ENCODE measurements at regions of chr14 and their contacts with region 1.

Region 1: GRCh38 chr14:69055999-69056788 is 77.1 kb upstream of the ACTN1 start:
- DNase-seq: peak; percentile 53
- H3K4me3 ChIP-seq: no peak overlapping the region
- H3K27ac ChIP-seq: peak overlapping the region; percentile 83
- H3K4me1 ChIP-seq: peaks cover 57% of the 10 kb centered on the region
- H3K27me3 ChIP-seq: no peaks in the 10 kb centered on the region
- CTCF ChIP-seq: peak in 1 of 2 donors; percentile 6
- POLR2A ChIP-seq: no peak

Region 2: GRCh38 chr14:68958553-68958952 is 97.6 kb before region 1 on chr14:
- CTCF ChIA-PET with region 1: interaction called, 10 read pairs
- POLR2A ChIA-PET with region 1: no interaction called
- dilution Hi-C with region 1: no loop called
- intact Hi-C with region 1: no loop called
- DNase-seq: peak; percentile 89
- H3K4me3 ChIP-seq: no peak overlapping the region
- H3K27ac ChIP-seq: peak overlapping the region; percentile 56
- H3K4me1 ChIP-seq: peaks cover 62% of the 10 kb centered on the region
- H3K27me3 ChIP-seq: no peaks in the 10 kb centered on the region
- CTCF ChIP-seq: no peak
- POLR2A ChIP-seq: no peak

Region 3: GRCh38 chr14:69043596-69044260 is 12.5 kb before region 1 on chr14:
- CTCF ChIA-PET with region 1: interaction called, 25 read pairs
- POLR2A ChIA-PET with region 1: interaction called, 3 read pairs
- dilution Hi-C with region 1: no loop called
- intact Hi-C with region 1: loop called (anchors 1 kb)
- DNase-seq: peak; percentile 56
- H3K4me3 ChIP-seq: no peak overlapping the region
- H3K27ac ChIP-seq: peak overlapping the region; percentile 39
- H3K4me1 ChIP-seq: peaks cover 60% of the 10 kb centered on the region
- H3K27me3 ChIP-seq: no peaks in the 10 kb centered on the region
- CTCF ChIP-seq: no peak
- POLR2A ChIP-seq: no peak

Region 4: GRCh38 chr14:69079183-69079742 is 23.1 kb after region 1 on chr14:
- CTCF ChIA-PET with region 1: interaction called, 6 read pairs
- POLR2A ChIA-PET with region 1: no interaction called
- dilution Hi-C with region 1: no loop called
- intact Hi-C with region 1: loop called (anchors 1 kb)
- DNase-seq: peak; percentile 94
- H3K4me3 ChIP-seq: peak overlapping the region in 1 of 3 experiments; percentile 33
- H3K27ac ChIP-seq: peak overlapping the region; percentile 100
- H3K4me1 ChIP-seq: peaks cover 47% of the 10 kb centered on the region
- H3K27me3 ChIP-seq: no peaks in the 10 kb centered on the region
- CTCF ChIP-seq: no peak
- POLR2A ChIP-seq: no peak

Region 5: DNA sequence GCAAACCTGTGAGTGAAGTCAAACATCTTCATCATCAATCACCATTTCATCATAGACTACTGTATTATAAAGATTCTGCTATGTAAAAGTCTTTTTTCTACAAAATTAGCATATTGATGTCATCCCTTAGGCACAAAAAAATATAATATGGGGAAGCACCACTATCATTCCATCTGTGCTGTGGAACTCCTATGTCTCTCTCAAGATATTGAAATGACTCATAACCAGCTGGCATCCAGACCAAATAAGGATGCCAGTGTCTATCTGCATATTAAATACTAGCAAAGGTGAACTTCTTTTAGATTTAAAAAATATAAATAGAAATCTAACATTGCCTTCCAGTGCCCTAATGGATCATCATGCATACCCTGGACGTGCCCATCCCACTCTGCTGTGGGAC is 114.6 kb after region 1 on chr14:
- CTCF ChIA-PET with region 1: no interaction called
- POLR2A ChIA-PET with region 1: no interaction called
- dilution Hi-C with region 1: no loop called
- intact Hi-C with region 1: no loop called
- DNase-seq: no peak
- H3K4me3 ChIP-seq: no peak overlapping the region
- H3K27ac ChIP-seq: no peak overlapping the region
- H3K4me1 ChIP-seq: no peaks in the 10 kb centered on the region
- H3K27me3 ChIP-seq: peaks cover 2 to 7% of the 10 kb centered on the region in 2 experiments
- CTCF ChIP-seq: no peak
- POLR2A ChIP-seq: no peak

Measured in endothelial cell of umbilical vein (primary cell).